ENCODE measurements at regions of chr12 and their contacts with region 1.

Region 1: GRCh38 chr12:98698603-98699463 is 53.7 kb downstream of the APAF1 start:
- DNase-seq: peak; percentile 65 to 92 (median 80)
- H3K4me3 ChIP-seq: peak overlapping the region in 1 of 4 donors; percentile 9
- H3K27ac ChIP-seq: peak overlapping the region in 1 of 5 donors; percentile 32
- H3K4me1 ChIP-seq: peaks cover 7 to 27% of the 10 kb centered on the region in 2 donors
- H3K27me3 ChIP-seq: no peaks in the 10 kb centered on the region
- CTCF ChIP-seq: peak; percentile 33 to 81 (median 70)
- POLR2A ChIP-seq: no peak

Region 2: GRCh38 chr12:98754095-98754494 is 55.3 kb after region 1 on chr12:
- intact Hi-C with region 1: no loop called
- DNase-seq: no peak
- H3K4me3 ChIP-seq: no peak overlapping the region
- H3K27ac ChIP-seq: no peak overlapping the region
- H3K4me1 ChIP-seq: no peaks in the 10 kb centered on the region
- H3K27me3 ChIP-seq: no peaks in the 10 kb centered on the region
- CTCF ChIP-seq: no peak
- POLR2A ChIP-seq: no peak

Region 3: GRCh38 chr12:98998697-98999299 is 300.0 kb after region 1 on chr12:
- intact Hi-C with region 1: loop called (anchors 5 to 10 kb)
- DNase-seq: peak in 1 of 7 donors; percentile 7
- H3K4me3 ChIP-seq: no peak overlapping the region
- H3K27ac ChIP-seq: peak overlapping the region in 1 of 5 donors; percentile 8
- H3K4me1 ChIP-seq: peaks cover 0 to 7% of the 10 kb centered on the region in 2 donors
- H3K27me3 ChIP-seq: no peaks in the 10 kb centered on the region
- CTCF ChIP-seq: peak; percentile 53 to 93 (median 79)
- POLR2A ChIP-seq: no peak

Region 4: GRCh38 chr12:99005601-99006000 is 306.8 kb after region 1 on chr12:
- intact Hi-C with region 1: loop called in 1 of 2 experiments (anchors 10 kb)
- DNase-seq: no peak
- H3K4me3 ChIP-seq: no peak overlapping the region
- H3K27ac ChIP-seq: no peak overlapping the region
- H3K4me1 ChIP-seq: no peaks in the 10 kb centered on the region
- H3K27me3 ChIP-seq: no peaks in the 10 kb centered on the region
- CTCF ChIP-seq: no peak
- POLR2A ChIP-seq: no peak